ENCODE measurements at regions of chrX and their contacts with region 1.

Region 1: GRCh38 chrX:71622576-71623450 is 4.5 kb upstream of the CXCR3 start:
- DNase-seq: peak; percentile 85
- H3K4me3 Mint-ChIP-seq: peak overlapping the region; percentile 57
- H3K27ac Mint-ChIP-seq: peak overlapping the region; percentile 92
- H3K4me1 Mint-ChIP-seq: peaks cover 64% of the 10 kb centered on the region
- H3K27me3 Mint-ChIP-seq: no peaks in the 10 kb centered on the region

Region 2: DNA sequence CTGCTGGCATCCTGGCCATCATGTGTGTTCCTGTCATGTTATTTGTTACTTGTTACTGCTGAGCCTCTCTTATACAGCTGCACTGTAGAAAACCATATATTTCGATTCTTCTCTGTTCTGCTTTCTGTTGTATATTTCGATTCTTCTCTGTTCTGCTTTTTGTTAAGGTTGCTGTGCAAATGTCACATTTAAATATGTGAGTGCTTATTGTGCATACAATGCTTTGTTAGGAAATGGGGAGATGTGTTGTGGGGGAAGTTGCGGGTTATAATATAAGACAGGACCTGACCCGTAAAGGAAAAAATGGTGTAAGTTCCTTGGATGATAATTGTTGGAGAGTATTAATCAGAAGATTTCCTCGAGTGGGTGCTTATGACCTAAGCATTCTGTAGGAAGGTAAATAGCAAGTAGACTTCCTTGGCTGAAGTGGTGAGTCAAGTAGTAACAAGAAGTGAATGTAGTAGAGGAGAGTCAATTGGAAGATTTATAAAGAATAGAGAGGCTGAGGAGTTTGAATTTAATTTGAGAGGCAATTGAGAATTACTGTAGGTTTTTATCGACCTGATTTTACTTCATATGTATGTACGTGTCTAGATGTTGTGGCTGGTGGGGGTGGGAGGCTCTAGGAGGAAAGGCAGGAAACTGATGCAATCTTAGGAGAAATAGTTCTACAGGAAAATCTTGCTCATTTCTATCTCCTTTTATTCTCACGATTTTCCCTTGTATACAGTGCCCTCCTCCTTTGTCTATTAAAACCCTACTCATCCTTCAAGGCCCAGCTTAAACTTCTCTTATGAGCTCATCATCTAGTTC is 81.4 kb before region 1 on chrX:
- CTCF ChIA-PET with region 1: no interaction called
- POLR2A ChIA-PET with region 1: interaction called, 13 read pairs
- intact Hi-C with region 1: loop called (anchors 2 kb)
- DNase-seq: no peak
- H3K4me3 Mint-ChIP-seq: peak overlapping the region; percentile 75
- H3K27ac Mint-ChIP-seq: peak overlapping the region; percentile 91
- H3K4me1 Mint-ChIP-seq: peaks cover 57% of the 10 kb centered on the region
- H3K27me3 Mint-ChIP-seq: no peaks in the 10 kb centered on the region

Region 3: DNA sequence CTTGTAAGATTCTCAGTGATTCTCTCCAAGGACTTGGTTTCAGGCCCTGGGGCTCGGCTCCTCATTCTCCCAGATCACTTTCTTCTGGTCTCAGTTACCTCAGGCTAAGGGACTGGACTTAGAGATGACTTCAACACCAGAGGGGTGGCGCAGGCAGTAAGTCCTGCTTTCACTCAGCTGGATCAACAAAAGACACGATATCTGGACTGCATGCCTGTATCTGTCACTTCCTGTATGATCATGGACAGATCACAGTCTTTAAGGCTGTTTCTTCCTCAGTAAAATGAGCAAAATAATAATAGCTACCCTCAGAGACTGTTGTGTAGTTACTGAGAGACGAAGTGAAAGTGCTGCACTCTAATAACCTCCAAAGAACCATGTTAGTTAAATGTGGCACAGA is 15.0 kb after region 1 on chrX:
- CTCF ChIA-PET with region 1: interaction called, 13 read pairs
- POLR2A ChIA-PET with region 1: interaction called, 30 read pairs
- intact Hi-C with region 1: loop called (anchors 1 kb)
- DNase-seq: peak; percentile 37
- H3K4me3 Mint-ChIP-seq: no peak overlapping the region
- H3K27ac Mint-ChIP-seq: no peak overlapping the region
- H3K4me1 Mint-ChIP-seq: peaks cover 17% of the 10 kb centered on the region
- H3K27me3 Mint-ChIP-seq: no peaks in the 10 kb centered on the region